Thyroid gland (tissue), 4 donors: ENCODE measurements at regions of chr1 and their contacts with region 1.

Region 1: DNA sequence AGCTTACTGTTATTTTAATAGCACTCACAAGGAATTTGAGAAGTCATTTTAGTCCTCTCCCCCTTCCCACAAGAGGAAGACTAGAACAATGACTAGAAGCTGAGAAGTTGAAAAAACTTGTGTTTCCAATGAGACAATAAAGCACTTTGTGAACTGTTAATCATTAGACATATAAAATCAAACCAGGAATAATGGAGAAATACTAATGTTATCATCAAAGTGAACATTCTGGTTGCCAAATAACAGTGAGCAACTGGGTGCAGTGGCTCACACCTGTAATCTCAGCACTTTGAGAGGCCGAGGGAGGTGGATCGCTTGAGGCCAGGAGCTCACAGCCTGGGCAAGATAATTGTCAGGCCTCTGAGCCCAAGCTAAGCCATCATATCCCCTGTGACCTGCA is 54.0 kb upstream of the RASAL2 start:
- DNase-seq: no peak
- H3K4me3 ChIP-seq: no peak overlapping the region
- H3K27ac ChIP-seq: peak overlapping the region in 1 of 3 donors; percentile 9
- H3K4me1 ChIP-seq: peaks cover 33 to 40% of the 10 kb centered on the region in 2 donors
- H3K27me3 ChIP-seq: no peaks in the 10 kb centered on the region
- CTCF ChIP-seq: no peak
- POLR2A ChIP-seq: no peak

Region 2: DNA sequence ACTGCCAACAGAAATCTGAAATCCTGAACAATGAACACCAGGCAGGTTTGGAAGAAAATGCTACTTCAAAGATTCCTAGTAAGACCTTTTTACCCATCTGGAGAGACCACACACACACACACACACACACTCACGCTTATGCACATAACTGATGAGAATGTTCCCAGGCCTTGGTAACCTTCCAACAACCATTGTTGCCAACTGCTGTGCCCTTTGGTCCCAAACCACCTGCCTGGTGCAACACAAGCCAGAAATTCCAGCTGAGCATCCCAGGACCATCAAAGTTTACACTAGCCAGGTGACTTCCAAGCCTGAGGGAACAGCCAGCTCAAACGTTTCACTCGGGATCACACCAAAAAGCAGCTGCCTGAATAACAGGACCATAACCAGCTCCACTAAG is 126.9 kb before region 1 on chr1:
- intact Hi-C with region 1: no loop called
- DNase-seq: peak in 1 of 2 donors; percentile 16
- H3K4me3 ChIP-seq: no peak overlapping the region
- H3K27ac ChIP-seq: no peak overlapping the region
- H3K4me1 ChIP-seq: no peaks in the 10 kb centered on the region
- H3K27me3 ChIP-seq: no peaks in the 10 kb centered on the region
- CTCF ChIP-seq: no peak
- POLR2A ChIP-seq: no peak

Region 3: GRCh38 chr1:177984136-177984525 is 55.8 kb before region 1 on chr1:
- intact Hi-C with region 1: no loop called
- DNase-seq: peak in 1 of 2 donors; percentile 2
- H3K4me3 ChIP-seq: no peak overlapping the region
- H3K27ac ChIP-seq: no peak overlapping the region
- H3K4me1 ChIP-seq: no peaks in the 10 kb centered on the region
- H3K27me3 ChIP-seq: no peaks in the 10 kb centered on the region
- CTCF ChIP-seq: no peak
- POLR2A ChIP-seq: no peak

Region 4: DNA sequence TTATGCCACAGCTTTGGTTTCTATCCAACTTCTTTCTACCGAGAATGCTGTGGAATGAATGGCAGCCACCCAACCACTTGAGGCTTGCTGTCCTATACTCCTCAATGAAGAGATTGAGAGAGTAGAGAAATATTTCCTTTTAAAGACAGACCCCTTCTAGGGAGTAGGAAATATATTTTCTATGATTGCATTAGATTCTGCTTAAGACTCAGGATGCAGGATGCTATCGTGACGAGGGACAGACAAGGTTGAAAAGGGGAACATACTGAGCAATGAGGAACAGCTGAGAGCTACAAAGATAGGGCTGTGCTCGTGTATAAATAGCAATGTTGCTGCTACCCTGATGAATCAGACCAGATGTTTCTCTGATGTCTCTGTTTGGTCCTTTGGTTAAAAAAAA is 46.9 kb after region 1 on chr1:
- intact Hi-C with region 1: loop called (anchors 5 kb)
- DNase-seq: peak; percentile 80 to 81
- H3K4me3 ChIP-seq: peak overlapping the region in 1 of 3 donors; percentile 1
- H3K27ac ChIP-seq: peak overlapping the region in 2 of 3 donors; percentile 22 to 55
- H3K4me1 ChIP-seq: peaks cover 12 to 18% of the 10 kb centered on the region in 2 donors
- H3K27me3 ChIP-seq: no peaks in the 10 kb centered on the region
- CTCF ChIP-seq: no peak
- POLR2A ChIP-seq: no peak

Region 5: GRCh38 chr1:178254433-178254832 is 214.5 kb after region 1 on chr1:
- intact Hi-C with region 1: no loop called
- DNase-seq: no peak
- H3K4me3 ChIP-seq: no peak overlapping the region
- H3K27ac ChIP-seq: no peak overlapping the region
- H3K4me1 ChIP-seq: no peaks in the 10 kb centered on the region
- H3K27me3 ChIP-seq: no peaks in the 10 kb centered on the region
- CTCF ChIP-seq: no peak
- POLR2A ChIP-seq: no peak